Breast epithelium (tissue), 4 donors: ENCODE measurements at regions of chr7 and their contacts with region 1.

Region 1: DNA sequence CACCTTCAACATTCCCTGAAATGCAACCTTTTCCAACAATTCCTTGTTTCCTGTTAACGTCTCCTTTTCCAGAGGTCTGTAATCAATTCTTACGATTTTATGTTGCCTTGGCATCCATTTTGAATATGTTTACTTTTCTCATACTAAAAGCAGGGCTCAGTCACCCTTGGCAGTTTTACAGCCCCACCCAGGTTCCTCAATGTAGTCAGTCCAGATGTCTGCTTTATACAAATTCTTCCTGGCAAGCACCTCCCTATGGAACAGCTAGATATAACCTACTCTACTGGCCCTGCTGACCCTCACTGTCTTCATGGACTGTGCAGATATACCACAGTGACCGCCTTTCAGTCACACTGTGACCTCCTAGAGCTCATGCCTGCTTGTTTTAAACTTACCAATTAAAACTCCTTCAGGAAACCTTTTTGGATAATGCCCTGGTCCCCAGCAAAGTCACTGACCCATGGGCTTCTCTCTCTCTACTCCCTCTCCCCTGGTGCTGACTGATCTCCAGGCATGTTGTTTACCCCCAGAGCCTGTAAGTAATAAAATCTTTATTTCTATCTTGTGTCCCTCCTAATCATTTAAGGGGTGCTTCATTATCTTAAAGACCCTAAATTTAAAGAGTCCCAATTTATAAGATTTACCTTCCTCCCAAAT is 147.1 kb upstream of the STEAP1 start:
- DNase-seq: no peak
- H3K4me3 ChIP-seq: no peak overlapping the region
- H3K27ac ChIP-seq: no peak overlapping the region
- H3K4me1 ChIP-seq: no peaks in the 10 kb centered on the region
- H3K27me3 ChIP-seq: no peaks in the 10 kb centered on the region
- CTCF ChIP-seq: no peak
- POLR2A ChIP-seq: no peak

Region 2: GRCh38 chr7:88522771-88523293 is 1484.3 kb before region 1 on chr7:
- intact Hi-C with region 1: no loop called
- DNase-seq: no peak
- H3K4me3 ChIP-seq: no peak overlapping the region
- H3K27ac ChIP-seq: no peak overlapping the region
- H3K4me1 ChIP-seq: no peaks in the 10 kb centered on the region
- H3K27me3 ChIP-seq: no peaks in the 10 kb centered on the region
- CTCF ChIP-seq: no peak
- POLR2A ChIP-seq: no peak

Region 3: DNA sequence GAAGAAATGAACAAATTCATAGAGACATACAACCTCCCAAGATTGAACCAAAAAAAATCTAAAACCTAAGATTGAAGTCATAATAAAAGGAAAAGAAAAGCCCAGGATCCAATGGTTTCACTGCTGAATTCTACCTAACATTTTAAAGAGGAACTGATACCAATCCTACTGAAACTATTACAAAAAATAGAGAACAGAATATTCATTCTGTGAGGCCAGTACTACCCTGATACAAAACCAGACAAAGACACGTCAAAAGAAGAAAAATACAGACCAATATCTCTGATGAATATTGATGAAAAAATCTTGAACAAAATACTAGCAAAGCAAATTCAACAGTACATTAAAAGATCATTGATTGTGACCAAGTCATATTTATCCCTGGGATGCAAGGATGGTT is 18.6 kb after region 1 on chr7:
- intact Hi-C with region 1: no loop called
- DNase-seq: no peak
- H3K4me3 ChIP-seq: no peak overlapping the region
- H3K27ac ChIP-seq: no peak overlapping the region
- H3K4me1 ChIP-seq: no peaks in the 10 kb centered on the region
- H3K27me3 ChIP-seq: no peaks in the 10 kb centered on the region
- CTCF ChIP-seq: no peak
- POLR2A ChIP-seq: no peak

Region 4: DNA sequence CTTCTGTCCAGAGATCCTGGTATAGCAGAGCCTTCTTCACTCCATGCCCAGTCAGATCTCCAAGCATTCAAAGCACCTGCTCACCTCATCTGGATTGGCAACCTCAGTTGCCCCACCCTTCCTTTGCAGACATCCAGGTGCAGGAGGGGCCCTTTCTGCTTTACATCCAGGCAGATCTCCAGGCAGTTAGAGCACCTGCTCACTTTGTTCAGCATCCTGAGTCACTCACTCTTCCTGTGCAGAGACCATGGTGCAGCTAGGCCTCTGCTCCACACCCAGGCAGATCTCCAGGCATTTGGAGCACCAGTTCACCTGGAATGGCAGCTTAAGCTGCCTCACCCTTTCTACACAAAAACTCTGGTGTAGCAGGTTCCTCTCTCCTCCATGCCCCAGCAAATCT is 742.1 kb after region 1 on chr7:
- intact Hi-C with region 1: loop called (anchors 10 kb)
- DNase-seq: no peak
- H3K4me3 ChIP-seq: no peak overlapping the region
- H3K27ac ChIP-seq: no peak overlapping the region
- H3K4me1 ChIP-seq: no peaks in the 10 kb centered on the region
- H3K27me3 ChIP-seq: no peaks in the 10 kb centered on the region
- CTCF ChIP-seq: no peak
- POLR2A ChIP-seq: no peak